Activated T-helper 2 cell treated with anti-CD3 and anti-CD28 coated beads, Interferon-gamma antibody, Interleukin-2, Interleukin-4, amounts not matched to agents 10 μg/mL and 5 μg/mL and 100 μg/mL, durations not matched to agents 14 hours and 24 hours and 36 hours (primary cell): ENCODE measurements at regions of chr3 and their contacts with region 1.

Region 1: GRCh38 chr3:30199096-30199759 is 407.2 kb upstream of the TGFBR2 start:
- DNase-seq: peak; percentile 26
- H3K4me3 Mint-ChIP-seq: no peak overlapping the region
- H3K27ac Mint-ChIP-seq: no peak overlapping the region
- H3K4me1 Mint-ChIP-seq: peaks cover 6% of the 10 kb centered on the region
- H3K27me3 Mint-ChIP-seq: peaks cover 7% of the 10 kb centered on the region

Region 2: DNA sequence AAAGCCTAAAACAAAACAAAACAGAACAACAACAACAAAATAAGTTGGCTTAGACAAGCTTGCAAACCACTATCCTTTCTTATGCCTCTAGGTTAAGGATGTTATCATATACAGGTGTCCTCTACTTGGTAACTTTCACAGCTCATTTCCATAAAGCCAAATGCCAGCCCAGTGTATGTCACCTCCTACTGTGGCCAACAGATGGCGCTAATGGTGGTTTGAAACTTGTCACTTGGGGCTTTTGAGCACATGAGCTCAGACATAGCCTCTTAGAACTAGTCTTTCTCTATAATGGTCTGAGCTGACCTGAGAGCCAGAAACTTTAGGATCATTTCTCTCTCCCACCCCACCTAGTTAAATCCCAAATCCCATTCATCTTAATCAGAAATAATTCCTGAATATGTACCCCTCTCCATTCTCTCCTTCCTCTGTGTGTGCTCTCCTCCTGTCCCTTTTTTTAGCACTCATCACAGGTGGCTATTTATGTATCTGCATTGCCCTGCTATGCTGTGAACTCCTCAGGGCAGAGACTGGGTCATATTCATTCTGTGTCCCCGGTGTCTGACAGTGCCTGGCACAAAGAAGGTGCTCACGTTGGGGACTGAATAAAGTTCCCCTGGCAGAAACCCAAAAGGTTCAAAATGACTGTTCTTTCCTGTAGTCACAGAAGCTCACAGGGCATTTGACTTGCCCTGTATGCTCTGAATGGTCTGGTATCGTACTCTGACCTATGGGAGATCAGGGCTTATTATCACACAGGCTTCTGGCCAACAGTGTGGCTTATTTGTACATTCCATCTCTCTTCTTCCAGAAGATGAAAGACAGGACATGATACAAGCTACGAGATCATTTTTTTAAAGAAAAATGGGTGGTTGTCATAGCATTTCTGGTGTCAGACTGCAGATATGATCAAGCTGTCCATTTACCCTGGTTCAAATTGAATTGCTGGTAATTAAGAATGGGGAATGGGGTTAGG is 1531.3 kb before region 1 on chr3:
- intact Hi-C with region 1: loop called (anchors 5 kb)
- DNase-seq: peak; percentile 37
- H3K4me3 Mint-ChIP-seq: no peak overlapping the region
- H3K27ac Mint-ChIP-seq: peak overlapping the region; percentile 36
- H3K4me1 Mint-ChIP-seq: peaks cover 7% of the 10 kb centered on the region
- H3K27me3 Mint-ChIP-seq: no peaks in the 10 kb centered on the region

Region 3: GRCh38 chr3:30042274-30042859 is 156.9 kb before region 1 on chr3:
- intact Hi-C with region 1: loop called (anchors 2 kb)
- DNase-seq: peak; percentile 18
- H3K4me3 Mint-ChIP-seq: no peak overlapping the region
- H3K27ac Mint-ChIP-seq: no peak overlapping the region
- H3K4me1 Mint-ChIP-seq: no peaks in the 10 kb centered on the region
- H3K27me3 Mint-ChIP-seq: peaks cover 37% of the 10 kb centered on the region

Region 4: GRCh38 chr3:30112902-30113484 is 86.2 kb before region 1 on chr3:
- intact Hi-C with region 1: loop called (anchors 1 kb)
- DNase-seq: no peak
- H3K4me3 Mint-ChIP-seq: no peak overlapping the region
- H3K27ac Mint-ChIP-seq: no peak overlapping the region
- H3K4me1 Mint-ChIP-seq: peaks cover 3% of the 10 kb centered on the region
- H3K27me3 Mint-ChIP-seq: peaks cover 32% of the 10 kb centered on the region